Ovary (tissue), 10 donors: ENCODE measurements at regions of chr20 and their contacts with region 1.

Region 1: DNA sequence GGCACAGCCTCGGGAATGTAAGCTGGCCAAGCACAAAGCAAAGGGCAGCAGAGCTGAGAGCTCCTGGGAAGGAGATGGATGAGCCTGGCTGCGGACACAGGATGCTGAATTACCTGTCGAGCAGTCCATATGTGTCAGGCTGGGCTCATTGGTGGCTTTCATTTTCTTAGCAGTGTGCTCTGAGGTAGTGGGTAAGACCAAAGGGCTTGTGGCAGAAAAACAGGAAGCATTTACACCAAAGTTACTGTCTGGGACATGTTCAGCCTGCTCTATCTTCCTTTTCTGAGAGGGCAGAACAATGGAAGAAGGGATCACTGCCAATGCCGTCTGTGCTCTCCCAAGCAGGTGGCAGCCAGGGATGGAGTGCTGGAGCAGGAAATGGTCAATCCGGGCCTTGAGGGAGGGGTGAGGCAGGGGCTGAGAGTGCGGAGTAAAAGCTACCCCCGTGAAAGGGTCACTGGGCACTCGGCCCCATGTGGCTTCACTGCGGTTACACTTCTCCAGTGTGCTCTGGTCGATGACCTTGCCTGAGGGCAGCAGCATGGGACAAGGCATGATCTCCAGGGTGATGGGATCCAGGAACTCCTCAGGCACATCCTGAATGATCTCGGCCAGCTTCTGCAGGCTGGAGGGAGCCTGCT is 36.9 kb upstream of the AVP start:
- DNase-seq: no peak
- H3K4me3 ChIP-seq: no peak overlapping the region
- H3K27ac ChIP-seq: no peak overlapping the region
- H3K4me1 ChIP-seq: no peaks in the 10 kb centered on the region
- H3K27me3 ChIP-seq: no peaks in the 10 kb centered on the region
- CTCF ChIP-seq: no peak
- EP300 ChIP-seq: no peak
- POLR2A ChIP-seq: no peak

Region 2: DNA sequence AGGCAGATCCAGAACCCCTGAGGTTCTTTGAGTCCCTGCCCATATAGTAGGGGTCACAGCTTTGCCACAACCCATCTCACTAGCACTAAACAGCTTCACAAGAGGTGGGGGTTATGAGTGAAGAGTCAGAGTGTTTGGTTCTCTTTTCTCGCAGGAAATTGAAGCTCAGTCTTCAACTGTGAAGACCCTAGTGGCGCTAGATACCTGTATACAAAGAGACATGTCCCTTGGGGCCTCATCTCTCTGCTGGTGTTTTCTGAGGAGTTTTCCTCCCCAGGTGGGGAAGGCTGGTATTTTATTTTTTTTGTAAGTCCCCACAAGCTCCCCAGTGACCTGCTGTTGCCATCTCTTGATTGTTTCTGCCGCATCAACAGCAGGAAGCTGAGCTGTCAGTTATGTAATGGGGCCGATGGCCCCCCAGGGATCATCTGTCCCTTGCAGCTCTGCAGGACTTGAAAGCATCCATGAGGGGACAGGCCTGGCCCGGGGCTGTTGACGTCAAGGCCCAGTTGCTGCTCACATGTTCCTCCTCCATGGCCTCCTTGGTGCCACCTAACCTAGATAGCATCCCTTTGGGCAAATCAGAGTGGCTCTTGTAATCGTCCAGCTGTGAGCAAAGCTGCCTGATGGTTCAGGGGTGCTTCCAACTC is 996.7 kb before region 1 on chr20:
- intact Hi-C with region 1: loop called in 1 of 4 experiments (anchors 5 kb)
- DNase-seq: no peak
- H3K4me3 ChIP-seq: no peak overlapping the region
- H3K27ac ChIP-seq: no peak overlapping the region
- H3K4me1 ChIP-seq: peaks cover 9% of the 10 kb centered on the region
- H3K27me3 ChIP-seq: no peaks in the 10 kb centered on the region
- CTCF ChIP-seq: no peak
- EP300 ChIP-seq: no peak
- POLR2A ChIP-seq: no peak

Region 3: DNA sequence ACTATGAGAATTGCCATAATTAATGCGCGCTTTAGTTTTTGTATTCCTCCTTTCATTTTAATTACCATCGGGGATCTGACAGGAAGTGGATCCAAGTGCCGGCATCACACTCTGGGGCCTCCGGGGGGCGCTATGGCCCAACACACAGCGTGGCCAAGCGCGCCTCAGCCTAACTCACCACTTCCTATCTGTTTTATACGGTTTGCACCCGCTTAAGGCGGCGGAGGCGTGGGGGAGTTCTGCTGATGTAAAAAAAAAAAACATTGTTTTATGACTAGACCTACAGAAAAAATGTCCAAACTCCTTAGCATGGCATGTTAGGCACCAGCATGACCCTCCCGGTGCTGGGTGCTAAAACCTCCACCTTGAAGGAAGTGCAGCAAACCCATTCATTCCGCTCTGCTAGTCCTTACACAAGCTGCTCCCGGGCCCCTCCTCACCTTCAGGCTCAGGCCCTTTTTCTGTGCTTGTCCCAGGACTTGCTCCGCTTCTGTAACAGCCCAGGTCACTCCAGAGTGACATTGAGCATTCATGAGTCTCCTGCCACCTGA is 433.3 kb before region 1 on chr20:
- intact Hi-C with region 1: no loop called
- DNase-seq: peak; percentile 49 to 82 (median 61)
- H3K4me3 ChIP-seq: no peak overlapping the region
- H3K27ac ChIP-seq: no peak overlapping the region
- H3K4me1 ChIP-seq: no peaks in the 10 kb centered on the region
- H3K27me3 ChIP-seq: no peaks in the 10 kb centered on the region
- CTCF ChIP-seq: peak; percentile 34 to 52 (median 40)
- EP300 ChIP-seq: no peak
- POLR2A ChIP-seq: no peak